ENCODE measurements at regions of chr16 and their contacts with region 1.

Region 1: DNA sequence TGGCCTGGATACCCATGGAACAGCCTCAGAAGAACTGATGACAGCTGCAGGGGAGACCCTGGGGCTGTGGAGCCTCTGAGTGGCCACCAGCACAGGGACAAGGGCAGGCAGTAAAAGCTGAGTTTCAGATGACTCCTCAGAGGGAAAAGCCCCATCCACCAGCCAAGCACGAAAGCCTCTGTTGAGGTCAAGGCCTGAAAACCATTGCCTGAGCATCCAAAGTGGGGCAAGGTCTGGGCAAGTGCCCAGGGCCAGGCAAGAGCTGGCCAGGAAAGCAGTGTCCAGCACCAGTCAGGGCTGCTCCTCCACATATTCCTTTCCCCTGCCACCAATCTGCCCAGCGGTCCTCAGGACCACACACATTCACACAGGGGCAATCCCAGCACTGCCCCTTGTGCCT is 16.4 kb downstream of the ATP6V0D1 start:
- DNase-seq: no peak
- ATAC-seq: no peak
- H3K4me3 ChIP-seq: no peak overlapping the region
- H3K27ac ChIP-seq: no peak overlapping the region
- H3K4me1 ChIP-seq: peaks cover 6 to 19% of the 10 kb centered on the region in 2 experiments; a peak in 3 of 4 replicates
- H3K27me3 ChIP-seq: no peaks in the 10 kb centered on the region
- CTCF ChIP-seq: no peak
- POLR2A ChIP-seq: no peak
- RAD21 ChIP-seq: no peak

Region 2: DNA sequence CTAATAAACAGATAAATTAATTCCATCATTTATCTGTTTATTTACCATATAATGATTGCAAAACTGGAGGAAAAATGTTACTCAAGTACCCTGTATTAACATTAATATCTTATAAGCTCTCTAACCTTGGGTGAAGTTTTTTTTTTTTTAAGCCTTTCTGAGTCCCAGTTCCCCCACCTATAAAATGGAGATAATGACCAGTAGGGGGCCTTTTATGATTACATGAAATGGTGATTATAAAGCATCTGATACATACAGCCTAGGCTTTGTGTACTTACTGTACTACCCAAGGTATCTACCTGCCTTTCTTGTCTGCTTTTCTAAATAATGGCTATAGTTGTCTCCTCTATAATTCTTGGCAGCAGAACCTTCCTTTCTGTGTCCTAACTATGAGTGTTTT is 115.4 kb before region 1 on chr16:
- CTCF ChIA-PET with region 1: interaction called, 4 read pairs
- POLR2A ChIA-PET with region 1: no interaction called
- RAD21 ChIA-PET with region 1: no interaction called
- intact Hi-C with region 1: loop called (anchors 2 kb)
- DNase-seq: peak; percentile 48
- ATAC-seq: peak; percentile 79
- H3K4me3 ChIP-seq: no peak overlapping the region
- H3K27ac ChIP-seq: no peak overlapping the region
- H3K4me1 ChIP-seq: no peaks in the 10 kb centered on the region
- H3K27me3 ChIP-seq: no peaks in the 10 kb centered on the region
- CTCF ChIP-seq: peak; percentile 53 to 72 (median 67); a peak in 5 of 6 replicates
- POLR2A ChIP-seq: no peak
- RAD21 ChIP-seq: peak; percentile 64

Region 3: DNA sequence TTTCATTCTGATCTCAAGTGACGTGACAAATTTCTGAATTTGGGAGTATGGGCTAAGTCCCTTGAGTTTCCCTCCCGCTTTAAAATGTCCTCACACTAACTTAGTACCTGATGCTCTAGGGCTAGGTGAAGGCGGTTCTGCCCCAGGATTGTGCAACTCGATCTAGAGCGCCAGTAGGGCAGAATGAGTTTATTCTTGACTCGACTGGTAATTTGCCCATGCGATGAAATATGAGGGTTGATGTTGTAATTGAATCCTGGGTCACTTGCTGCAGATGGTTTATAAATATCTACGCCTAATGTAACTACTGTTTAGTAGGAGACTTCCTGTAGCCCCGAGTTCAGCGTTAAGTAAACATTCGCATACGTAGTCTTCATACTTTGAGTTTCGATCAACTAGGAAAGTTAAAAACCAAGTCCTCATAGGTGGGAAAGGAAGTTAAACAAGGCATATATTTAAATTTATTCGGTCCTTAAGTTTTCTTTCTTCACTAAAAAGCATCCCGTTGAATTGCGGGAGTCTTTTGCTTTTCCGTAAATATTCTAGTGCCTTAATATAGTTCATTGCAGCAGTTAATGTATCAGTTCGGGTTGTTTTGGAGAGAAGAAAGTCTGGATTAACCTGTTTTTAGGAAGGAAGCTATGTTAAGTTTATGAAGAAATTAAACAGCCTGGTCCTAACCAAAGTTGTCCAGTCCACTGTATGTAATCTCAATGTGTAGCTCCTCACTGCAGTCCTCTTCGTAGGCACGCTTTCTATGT is 99.3 kb after region 1 on chr16:
- CTCF ChIA-PET with region 1: no interaction called
- POLR2A ChIA-PET with region 1: no interaction called
- RAD21 ChIA-PET with region 1: no interaction called
- intact Hi-C with region 1: no loop called
- DNase-seq: no peak
- ATAC-seq: no peak
- H3K4me3 ChIP-seq: peak overlapping the region; percentile 88 to 99
- H3K27ac ChIP-seq: peak overlapping the region; percentile 100
- H3K4me1 ChIP-seq: peaks cover 18 to 26% of the 10 kb centered on the region in 2 experiments
- H3K27me3 ChIP-seq: no peaks in the 10 kb centered on the region
- CTCF ChIP-seq: no peak
- POLR2A ChIP-seq: no peak
- RAD21 ChIP-seq: no peak